ENCODE measurements at regions of chr20 and their contacts with region 1.

Region 1: DNA sequence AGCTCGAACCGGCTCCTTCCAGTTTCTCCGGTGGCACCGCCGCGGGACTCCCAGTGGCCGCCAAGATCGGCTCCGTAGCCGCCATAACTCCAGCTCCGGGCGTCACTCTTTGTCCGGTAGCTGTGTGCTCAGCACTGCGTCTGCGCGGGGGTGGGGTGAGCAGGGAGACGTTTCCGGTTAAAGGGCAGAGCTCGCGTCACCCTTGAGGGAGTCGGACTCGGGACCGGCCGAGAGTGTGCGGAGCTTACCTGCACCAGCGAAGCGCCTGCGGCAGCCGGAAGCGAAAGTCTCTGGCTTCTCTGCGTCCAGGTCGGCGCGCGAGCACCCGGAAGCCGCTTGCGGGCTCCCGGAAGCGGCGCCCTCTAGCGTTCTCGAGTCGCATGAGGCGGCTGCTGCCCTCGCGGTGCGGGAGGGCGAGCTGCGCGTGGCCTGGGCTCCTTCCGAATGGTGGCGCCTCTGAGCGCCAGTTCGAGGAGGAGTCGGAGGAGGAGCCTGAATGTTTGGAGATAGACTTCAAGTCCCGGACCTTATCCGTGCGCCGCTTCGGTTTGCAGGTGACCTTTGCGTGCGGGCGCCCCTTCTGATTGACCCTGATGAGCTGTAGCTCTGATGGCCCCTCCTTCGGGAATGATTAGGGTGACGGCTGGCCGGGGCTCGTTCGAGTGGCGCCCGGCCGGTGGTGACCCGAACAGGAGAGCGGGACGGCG is at the start of gene SCAND1:
- DNase-seq: peak; percentile 98
- ATAC-seq: peak; percentile 91
- H3K4me3 Mint-ChIP-seq: peak within 1 kb of the TSS; percentile 99
- H3K27ac Mint-ChIP-seq: peak within 1 kb of the TSS; percentile 100
- H3K4me1 Mint-ChIP-seq: peaks cover 8% of the 10 kb centered on the region
- H3K27me3 Mint-ChIP-seq: no peaks in the 10 kb centered on the region
- total RNA-seq, gene SCAND1: 57.8 to 60.9 TPM

Region 2: GRCh38 chr20:35490736-35491181 is 463.6 kb before region 1 on chr20:
- POLR2A ChIA-PET with region 1: interaction called, 14 read pairs
- DNase-seq: peak; percentile 70
- ATAC-seq: peak; percentile 98
- H3K4me3 Mint-ChIP-seq: peak overlapping the region; percentile 99
- H3K27ac Mint-ChIP-seq: peak overlapping the region; percentile 99
- H3K4me1 Mint-ChIP-seq: peaks cover 33% of the 10 kb centered on the region
- H3K27me3 Mint-ChIP-seq: no peaks in the 10 kb centered on the region

Region 3: GRCh38 chr20:35664544-35665221 is 289.7 kb before region 1 on chr20 and contains the starts of genes CPNE1 and RBM12:
- POLR2A ChIA-PET with region 1: interaction called, 26 read pairs
- DNase-seq: peak; percentile 96
- ATAC-seq: peak; percentile 82
- H3K4me3 Mint-ChIP-seq: peak within 1 kb of the TSS; percentile 79
- H3K27ac Mint-ChIP-seq: peak within 1 kb of the TSS; percentile 99
- H3K4me1 Mint-ChIP-seq: peaks cover 35% of the 10 kb centered on the region
- H3K27me3 Mint-ChIP-seq: no peaks in the 10 kb centered on the region
- total RNA-seq, gene CPNE1: 296 to 327 TPM
- total RNA-seq, gene RBM12: 116 to 120 TPM

Region 4: DNA sequence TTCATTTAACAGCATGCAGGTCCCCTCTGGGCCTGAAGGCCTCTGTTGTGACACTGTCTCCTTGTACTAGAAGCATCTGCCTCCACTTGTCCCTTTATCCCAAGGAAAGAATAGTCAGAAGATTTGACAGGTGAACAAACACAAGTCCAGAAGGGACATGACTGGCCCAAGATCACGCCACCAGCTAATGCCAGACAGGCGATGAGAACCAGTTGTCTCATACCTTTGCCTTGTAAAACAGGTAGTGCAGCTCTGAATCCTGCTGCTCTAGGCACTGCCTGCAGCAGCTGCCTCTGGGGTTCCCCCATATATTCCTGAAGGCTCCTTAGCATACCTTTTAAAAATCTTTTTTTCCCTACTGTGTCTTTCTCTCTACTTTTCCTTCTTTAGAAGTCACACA is 25.1 kb before region 1 on chr20:
- POLR2A ChIA-PET with region 1: no interaction called
- DNase-seq: no peak
- ATAC-seq: no peak
- H3K4me3 Mint-ChIP-seq: no peak overlapping the region
- H3K27ac Mint-ChIP-seq: no peak overlapping the region
- H3K4me1 Mint-ChIP-seq: peaks cover 9% of the 10 kb centered on the region
- H3K27me3 Mint-ChIP-seq: no peaks in the 10 kb centered on the region

Region 5: GRCh38 chr20:35942243-35942642 is 12.1 kb before region 1 on chr20:
- POLR2A ChIA-PET with region 1: interaction called, 16 read pairs
- DNase-seq: no peak
- ATAC-seq: no peak
- H3K4me3 Mint-ChIP-seq: no peak overlapping the region
- H3K27ac Mint-ChIP-seq: no peak overlapping the region
- H3K4me1 Mint-ChIP-seq: peaks cover under 1% of the 10 kb centered on the region
- H3K27me3 Mint-ChIP-seq: no peaks in the 10 kb centered on the region

Region 6: DNA sequence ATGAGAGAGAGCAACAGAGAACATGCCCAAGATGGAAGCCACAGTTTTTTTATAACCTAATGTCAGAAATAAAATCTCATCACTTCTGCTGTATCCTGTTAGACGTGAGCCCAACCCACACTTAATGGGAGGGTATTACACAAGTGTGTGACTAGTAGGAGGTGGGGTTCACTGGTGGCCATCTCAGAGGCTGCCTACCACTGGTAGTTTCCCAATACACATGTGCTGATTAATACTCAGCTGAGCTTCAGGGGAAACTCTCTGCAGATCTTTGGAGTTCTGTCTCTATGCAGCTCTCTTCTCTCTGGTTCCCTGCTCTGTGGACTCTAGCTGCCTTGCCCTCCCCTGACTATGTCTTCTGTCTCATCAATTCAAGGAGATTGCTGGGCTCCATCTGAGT is 49.7 kb after region 1 on chr20:
- POLR2A ChIA-PET with region 1: no interaction called
- DNase-seq: no peak
- ATAC-seq: no peak
- H3K4me3 Mint-ChIP-seq: no peak overlapping the region
- H3K27ac Mint-ChIP-seq: no peak overlapping the region
- H3K4me1 Mint-ChIP-seq: no peaks in the 10 kb centered on the region
- H3K27me3 Mint-ChIP-seq: peaks cover 4% of the 10 kb centered on the region

Measured in activated naive CD8-positive, alpha-beta T cell treated with anti-CD3 and anti-CD28 coated beads, Interleukin-2, amount 10 ng/mL, durations not matched to agents 7 days and 5 days (primary cell).